Gastrocnemius medialis (tissue), 4 donors: ENCODE measurements at regions of chr14 and their contacts with region 1.

Region 1: GRCh38 chr14:24013654-24014514 is 25.2 kb downstream of the DHRS4L2 start:
- DNase-seq: peak in 1 of 2 donors; percentile 36
- ATAC-seq: peak; percentile 91 to 96
- H3K4me3 ChIP-seq: peak overlapping the region in 1 of 4 donors; percentile 27
- H3K27ac ChIP-seq: no peak overlapping the region
- H3K4me1 ChIP-seq: peaks cover 4 to 5% of the 10 kb centered on the region in 2 donors
- H3K27me3 ChIP-seq: no peaks in the 10 kb centered on the region
- CTCF ChIP-seq: peak; percentile 92 to 96 (median 93)
- POLR2A ChIP-seq: no peak

Region 2: DNA sequence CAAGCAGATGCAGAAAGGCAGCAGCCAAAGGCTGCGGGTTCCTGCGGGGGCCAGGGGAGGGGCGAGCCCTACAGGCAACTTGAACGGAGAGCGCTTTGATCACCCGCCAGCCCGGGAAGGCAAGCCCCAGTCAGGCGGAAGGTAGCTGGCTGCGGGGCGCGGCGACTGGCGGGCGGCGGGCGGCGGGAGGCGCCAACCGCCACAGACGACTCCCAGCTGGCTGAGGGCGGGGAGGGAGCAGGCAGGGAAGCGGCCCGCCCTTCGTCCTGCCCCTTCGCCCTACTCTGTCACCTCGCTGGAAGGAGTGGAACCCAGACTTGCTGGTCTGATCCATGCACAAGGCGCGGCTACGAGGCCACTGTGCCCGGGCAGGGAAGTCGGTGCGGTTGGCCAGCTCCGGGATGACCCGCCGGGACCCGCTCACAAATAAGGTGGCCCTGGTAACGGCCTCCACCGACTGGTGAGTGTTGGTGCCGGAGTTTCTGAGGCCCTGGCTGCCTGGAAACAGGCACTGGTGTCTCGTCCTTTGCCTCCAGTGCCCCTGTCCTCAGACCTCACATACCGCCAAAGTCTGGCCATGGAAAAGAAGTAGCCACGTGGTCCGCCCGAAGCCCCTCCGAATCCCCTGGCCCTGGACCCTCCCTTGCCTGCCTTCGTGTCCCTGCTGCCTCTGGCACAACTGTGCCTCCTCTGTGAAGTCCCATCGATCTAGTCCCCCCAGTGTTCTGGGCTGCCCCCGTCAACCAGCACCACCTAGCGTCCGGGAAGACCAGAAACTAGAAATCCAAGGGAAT is 22.5 kb after region 1 on chr14:
- in situ Hi-C with region 1: no loop called
- intact Hi-C with region 1: loop called (anchors 1 kb)
- DNase-seq: peak; percentile 76 to 82
- ATAC-seq: peak; percentile 76 to 80
- H3K4me3 ChIP-seq: peak overlapping the region; percentile 50 to 93 (median 64)
- H3K27ac ChIP-seq: peak overlapping the region; percentile 81 to 96 (median 94)
- H3K4me1 ChIP-seq: peaks cover 11 to 25% of the 10 kb centered on the region in 2 donors
- H3K27me3 ChIP-seq: no peaks in the 10 kb centered on the region
- CTCF ChIP-seq: peak; percentile 73 to 86 (median 79)
- POLR2A ChIP-seq: peak; percentile 43 to 68

Region 3: GRCh38 chr14:24051789-24052655 is 38.1 kb after region 1 on chr14 and contains the start of gene CARMIL3:
- in situ Hi-C with region 1: no loop called
- intact Hi-C with region 1: loop called (anchors 5 kb)
- DNase-seq: peak in 1 of 2 donors; percentile 41
- ATAC-seq: peak; percentile 85 to 86
- H3K4me3 ChIP-seq: peak within 1 kb of the TSS; percentile 56 to 77 (median 66)
- H3K27ac ChIP-seq: peak within 1 kb of the TSS; percentile 57 to 69 (median 60)
- H3K4me1 ChIP-seq: peaks cover 6 to 8% of the 10 kb centered on the region in 2 donors
- H3K27me3 ChIP-seq: peaks cover 0 to 3% (median 0%) of the 10 kb centered on the region in 3 donors
- CTCF ChIP-seq: no peak
- POLR2A ChIP-seq: no peak
- total RNA-seq, gene CARMIL3: 0.04 to 0.31 TPM in 2 of 4 donors, not detected in the others

Region 4: GRCh38 chr14:24079491-24080141 is 65.7 kb after region 1 on chr14:
- in situ Hi-C with region 1: no loop called
- intact Hi-C with region 1: no loop called
- DNase-seq: no peak
- ATAC-seq: no peak
- H3K4me3 ChIP-seq: no peak overlapping the region
- H3K27ac ChIP-seq: no peak overlapping the region
- H3K4me1 ChIP-seq: peaks cover 0 to 10% of the 10 kb centered on the region in 2 donors
- H3K27me3 ChIP-seq: no peaks in the 10 kb centered on the region
- CTCF ChIP-seq: no peak
- POLR2A ChIP-seq: no peak

Region 5: DNA sequence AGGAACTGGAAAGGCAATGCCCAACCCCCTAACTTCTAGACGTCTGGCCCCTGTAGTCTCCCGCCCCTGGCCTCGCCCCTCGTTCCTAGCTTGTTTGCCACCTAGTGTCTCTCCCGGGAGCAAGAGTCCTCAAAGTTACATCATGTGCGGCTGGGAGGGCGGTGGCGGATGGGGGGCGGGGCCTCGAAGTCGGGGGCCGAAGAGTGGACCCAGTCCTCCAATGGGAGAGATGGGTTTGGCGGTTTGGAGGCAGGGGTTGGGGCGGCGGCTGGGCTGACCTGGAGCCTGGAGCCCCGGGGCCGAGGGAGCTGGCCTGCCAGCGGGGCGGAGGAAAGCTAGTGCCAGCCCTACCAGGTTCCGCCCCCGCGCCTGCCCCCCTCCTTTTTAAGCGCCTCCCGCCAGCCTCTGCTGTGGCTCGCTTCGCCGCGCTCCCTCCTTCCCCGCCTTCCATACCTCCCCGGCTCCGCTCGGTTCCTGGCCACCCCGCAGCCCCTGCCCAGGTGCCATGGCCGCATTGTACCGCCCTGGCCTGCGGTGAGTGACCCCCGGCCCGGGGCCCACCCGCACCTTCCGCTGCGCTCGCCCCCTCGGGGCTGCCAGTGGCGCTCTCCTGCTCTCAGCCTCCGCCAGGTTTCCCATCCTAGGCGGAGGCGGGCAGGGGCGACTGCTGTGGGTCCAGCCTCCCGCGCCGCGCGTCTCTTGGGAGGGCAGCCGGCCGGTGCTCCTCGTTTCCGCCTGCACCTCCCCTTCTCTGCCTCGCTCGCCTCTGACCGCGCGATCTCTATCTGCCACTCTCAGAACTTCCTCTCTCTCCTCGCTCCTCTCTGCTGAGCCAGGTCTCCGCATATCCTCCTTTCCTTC is 80.2 kb after region 1 on chr14 and contains the start of gene PCK2:
- in situ Hi-C with region 1: no loop called
- intact Hi-C with region 1: loop called (anchors 1 kb)
- DNase-seq: peak; percentile 88 to 93
- ATAC-seq: peak; percentile 88 to 90
- H3K4me3 ChIP-seq: peak within 1 kb of the TSS; percentile 75 to 97 (median 90)
- H3K27ac ChIP-seq: peak within 1 kb of the TSS; percentile 83 to 88 (median 88)
- H3K4me1 ChIP-seq: peaks cover 10 to 14% of the 10 kb centered on the region in 2 donors
- H3K27me3 ChIP-seq: no peaks in the 10 kb centered on the region
- CTCF ChIP-seq: peak in 1 of 5 experiments; percentile 16
- POLR2A ChIP-seq: peak; percentile 53
- total RNA-seq, gene PCK2: 1.9 to 9.8 (median 3.6) TPM

Region 6: GRCh38 chr14:24108336-24108874 is 94.5 kb after region 1 on chr14:
- in situ Hi-C with region 1: no loop called
- intact Hi-C with region 1: loop called (anchors 1 kb)
- DNase-seq: no peak
- ATAC-seq: peak in 1 of 2 donors; percentile 15
- H3K4me3 ChIP-seq: no peak overlapping the region
- H3K27ac ChIP-seq: peak overlapping the region; percentile 2 to 55 (median 29)
- H3K4me1 ChIP-seq: peaks cover 9 to 12% of the 10 kb centered on the region in 2 donors
- H3K27me3 ChIP-seq: no peaks in the 10 kb centered on the region
- CTCF ChIP-seq: no peak
- POLR2A ChIP-seq: no peak